PC-3 (cell line): ENCODE measurements at regions of chr4 and their contacts with region 1.

Region 1: DNA sequence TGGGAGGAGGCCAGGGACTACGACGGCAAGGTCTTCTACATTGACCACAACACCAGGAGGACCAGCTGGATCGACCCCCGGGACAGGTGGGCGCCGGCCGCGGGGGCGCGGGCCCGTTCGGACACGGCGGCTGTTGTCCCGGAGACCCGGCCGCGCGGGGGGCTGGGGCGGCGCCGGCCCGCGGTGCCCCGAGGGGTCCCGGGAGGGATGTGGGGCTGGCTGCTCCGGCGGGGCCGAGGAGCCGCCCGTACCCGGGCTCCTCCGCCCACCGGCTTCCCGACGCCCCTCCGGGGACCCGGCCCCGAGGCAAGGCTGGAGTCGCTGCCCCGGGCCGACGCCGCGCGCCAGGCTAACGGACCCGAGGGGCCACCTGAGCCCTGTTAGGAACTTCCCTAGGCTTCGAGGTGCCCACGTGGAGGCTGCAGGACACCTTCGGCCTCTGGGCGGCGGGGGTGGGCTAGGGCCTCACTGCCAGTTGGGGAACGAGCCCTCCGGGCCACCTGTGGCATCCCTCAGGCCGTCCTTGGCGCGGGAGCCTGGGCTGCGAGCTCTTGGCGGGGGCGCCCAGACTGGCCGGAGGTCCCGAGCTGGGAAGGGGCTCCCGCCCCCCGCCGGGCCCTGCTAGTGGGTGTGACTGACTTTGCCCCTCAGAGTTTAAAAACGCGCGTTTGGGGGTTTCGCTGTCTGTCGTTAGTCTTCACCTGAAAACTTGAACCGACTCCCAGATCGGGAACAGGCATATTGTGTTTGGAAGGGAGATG is 660 bp downstream of the WWC2 start:
- DNase-seq: peak; percentile 31
- ATAC-seq: peak; percentile 9
- H3K4me3 ChIP-seq: peak overlapping the region; percentile 93
- H3K27ac ChIP-seq: no peak overlapping the region
- H3K4me1 ChIP-seq: peaks cover 20% of the 10 kb centered on the region
- H3K27me3 ChIP-seq: no peaks in the 10 kb centered on the region
- CTCF ChIP-seq: no peak

Region 2: GRCh38 chr4:183068502-183068901 is 31.2 kb before region 1 on chr4:
- CTCF ChIA-PET with region 1: no interaction called
- POLR2A ChIA-PET with region 1: no interaction called
- intact Hi-C with region 1: no loop called
- DNase-seq: no peak
- ATAC-seq: no peak
- H3K4me3 ChIP-seq: no peak overlapping the region
- H3K27ac ChIP-seq: no peak overlapping the region
- H3K4me1 ChIP-seq: no peaks in the 10 kb centered on the region
- H3K27me3 ChIP-seq: no peaks in the 10 kb centered on the region
- CTCF ChIP-seq: no peak

Region 3: GRCh38 chr4:183142571-183143550 is 43.1 kb after region 1 on chr4:
- CTCF ChIA-PET with region 1: no interaction called
- POLR2A ChIA-PET with region 1: no interaction called
- intact Hi-C with region 1: loop called (anchors 2 kb)
- DNase-seq: peak; percentile 85
- ATAC-seq: peak; percentile 88
- H3K4me3 ChIP-seq: no peak overlapping the region; the same call in 1 of the 2 replicates
- H3K27ac ChIP-seq: peak overlapping the region; percentile 38; the same call in 1 of the 2 replicates
- H3K4me1 ChIP-seq: peaks cover 21% of the 10 kb centered on the region
- H3K27me3 ChIP-seq: no peaks in the 10 kb centered on the region
- CTCF ChIP-seq: no peak

Region 4: GRCh38 chr4:183154701-183155391 is 55.1 kb after region 1 on chr4:
- CTCF ChIA-PET with region 1: no interaction called
- POLR2A ChIA-PET with region 1: no interaction called
- intact Hi-C with region 1: no loop called
- DNase-seq: no peak
- ATAC-seq: no peak
- H3K4me3 ChIP-seq: no peak overlapping the region
- H3K27ac ChIP-seq: no peak overlapping the region
- H3K4me1 ChIP-seq: no peaks in the 10 kb centered on the region
- H3K27me3 ChIP-seq: no peaks in the 10 kb centered on the region
- CTCF ChIP-seq: no peak